Caco-2 (cell line): ENCODE measurements at regions of chrX and their contacts with region 1.

Region 1: DNA sequence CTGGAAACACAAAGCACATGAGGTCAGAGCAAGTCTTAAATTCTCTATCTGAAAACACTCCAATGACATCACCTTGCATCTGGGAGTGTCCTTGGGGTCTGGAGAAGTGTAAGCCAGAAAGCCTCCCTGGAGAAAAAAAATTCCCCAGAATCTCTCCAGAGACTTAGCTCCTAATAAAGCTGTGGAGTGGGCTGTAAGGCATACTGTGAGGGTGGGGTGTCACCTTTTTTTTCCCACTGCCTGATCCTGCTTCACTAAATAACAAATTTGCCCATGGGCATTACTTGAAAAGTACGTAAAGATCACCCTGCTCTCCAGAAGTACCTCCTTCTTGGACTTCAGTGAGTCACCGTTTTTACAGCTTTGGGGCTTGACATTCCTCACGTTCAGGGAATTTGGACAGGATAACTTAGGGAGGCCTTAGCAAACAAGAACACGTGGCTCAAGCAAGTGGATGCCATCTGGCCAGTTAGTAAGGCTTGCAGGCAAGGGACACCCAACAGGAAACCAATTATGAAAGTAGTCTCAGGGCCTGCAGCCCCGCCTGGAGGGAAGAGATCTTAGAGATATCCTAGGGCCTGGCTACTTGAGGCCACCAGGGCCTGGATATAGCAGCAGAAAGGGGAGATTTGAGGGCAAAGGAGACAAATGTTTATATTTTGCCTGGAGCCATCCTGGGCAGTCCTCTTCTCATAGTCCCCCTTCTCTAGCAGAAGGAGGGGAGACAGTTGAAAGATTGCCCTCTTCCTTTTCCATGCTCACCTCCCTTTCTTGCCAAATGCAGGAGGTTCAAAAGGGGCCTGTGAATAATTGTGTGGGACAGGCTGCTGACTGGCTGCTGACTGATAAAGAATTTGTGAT is 60.1 kb upstream of the PLAC1 start:
- DNase-seq: peak; percentile 80 to 90
- H3K4me3 ChIP-seq: no peak overlapping the region
- H3K4me3 Mint-ChIP-seq: peak overlapping the region; percentile 42
- H3K27ac Mint-ChIP-seq: peak overlapping the region; percentile 63
- H3K4me1 ChIP-seq: peaks cover 22% of the 10 kb centered on the region
- H3K4me1 Mint-ChIP-seq: peaks cover 6% of the 10 kb centered on the region
- H3K27me3 ChIP-seq: no peaks in the 10 kb centered on the region
- H3K27me3 Mint-ChIP-seq: no peaks in the 10 kb centered on the region
- CTCF ChIP-seq: peak in 1 of 2 experiments; percentile 29

Region 2: DNA sequence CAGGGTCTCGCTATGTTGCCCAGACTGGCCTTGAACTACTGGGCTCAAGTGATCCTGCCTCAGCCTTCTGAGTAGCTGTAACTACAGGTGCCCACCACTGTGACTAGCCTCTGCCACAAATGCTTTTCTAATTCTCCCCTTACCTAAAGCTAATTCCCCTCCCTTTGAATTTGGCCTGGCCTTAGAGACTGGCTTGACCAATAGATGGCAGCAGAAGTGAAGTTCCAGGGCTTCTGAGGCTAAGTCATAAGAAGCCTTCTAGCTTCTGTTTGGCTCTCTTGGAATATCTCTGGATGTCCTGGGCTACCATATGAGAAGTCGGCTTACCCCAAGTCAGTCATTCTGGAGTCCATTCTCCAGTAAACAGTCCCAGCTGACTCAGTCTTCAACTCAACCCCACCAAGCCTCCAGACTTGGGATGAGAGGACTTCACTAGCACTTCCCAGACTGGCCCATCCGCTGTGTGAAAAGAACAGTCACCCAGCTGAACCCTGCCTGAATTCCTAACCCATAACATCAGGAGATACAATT is 197.4 kb before region 1 on chrX:
- CTCF ChIA-PET with region 1: no interaction called
- POLR2A ChIA-PET with region 1: no interaction called
- intact Hi-C with region 1: loop called (anchors 2 kb)
- DNase-seq: peak; percentile 55 to 61
- H3K4me3 ChIP-seq: no peak overlapping the region
- H3K4me3 Mint-ChIP-seq: no peak overlapping the region
- H3K27ac Mint-ChIP-seq: no peak overlapping the region
- H3K4me1 ChIP-seq: no peaks in the 10 kb centered on the region
- H3K4me1 Mint-ChIP-seq: no peaks in the 10 kb centered on the region
- H3K27me3 ChIP-seq: no peaks in the 10 kb centered on the region
- H3K27me3 Mint-ChIP-seq: no peaks in the 10 kb centered on the region
- CTCF ChIP-seq: peak; percentile 47 to 67

Region 3: GRCh38 chrX:134670134-134670924 is 48.0 kb before region 1 on chrX:
- CTCF ChIA-PET with region 1: no interaction called
- POLR2A ChIA-PET with region 1: no interaction called
- intact Hi-C with region 1: loop called (anchors 5 kb)
- DNase-seq: peak; percentile 47 to 60
- H3K4me3 ChIP-seq: no peak overlapping the region
- H3K4me3 Mint-ChIP-seq: no peak overlapping the region
- H3K27ac Mint-ChIP-seq: no peak overlapping the region
- H3K4me1 ChIP-seq: peaks cover 12% of the 10 kb centered on the region
- H3K4me1 Mint-ChIP-seq: no peaks in the 10 kb centered on the region
- H3K27me3 ChIP-seq: no peaks in the 10 kb centered on the region
- H3K27me3 Mint-ChIP-seq: no peaks in the 10 kb centered on the region
- CTCF ChIP-seq: no peak

Region 4: DNA sequence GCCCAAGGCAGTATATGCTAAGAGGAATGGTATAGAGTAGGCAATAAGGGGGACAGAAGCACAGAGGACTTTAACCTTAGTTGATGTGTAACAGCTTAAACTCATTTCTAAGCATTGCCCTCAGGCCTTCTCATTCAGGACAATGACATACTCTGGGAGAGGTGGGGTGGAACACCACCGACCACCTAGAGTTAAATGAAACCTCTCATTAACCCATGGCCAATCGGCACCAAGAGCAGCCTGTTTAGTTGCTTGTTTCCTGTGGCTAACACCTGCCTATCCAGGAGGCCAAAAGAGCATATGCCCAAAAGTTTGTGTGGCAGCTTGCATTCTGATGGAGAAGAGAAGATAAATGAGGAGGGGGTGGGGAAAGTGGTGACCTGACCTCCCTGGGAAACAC is 28.7 kb after region 1 on chrX:
- CTCF ChIA-PET with region 1: no interaction called
- POLR2A ChIA-PET with region 1: no interaction called
- intact Hi-C with region 1: loop called (anchors 1 kb)
- DNase-seq: peak in 1 of 2 experiments; percentile 14
- H3K4me3 ChIP-seq: no peak overlapping the region
- H3K4me3 Mint-ChIP-seq: peak overlapping the region; percentile 33
- H3K27ac Mint-ChIP-seq: peak overlapping the region; percentile 75
- H3K4me1 ChIP-seq: peaks cover 34% of the 10 kb centered on the region
- H3K4me1 Mint-ChIP-seq: peaks cover 32% of the 10 kb centered on the region
- H3K27me3 ChIP-seq: no peaks in the 10 kb centered on the region
- H3K27me3 Mint-ChIP-seq: no peaks in the 10 kb centered on the region
- CTCF ChIP-seq: no peak